Heart right ventricle (tissue), 16 donors: ENCODE measurements at regions of chr12 and their contacts with region 1.

Region 1: DNA sequence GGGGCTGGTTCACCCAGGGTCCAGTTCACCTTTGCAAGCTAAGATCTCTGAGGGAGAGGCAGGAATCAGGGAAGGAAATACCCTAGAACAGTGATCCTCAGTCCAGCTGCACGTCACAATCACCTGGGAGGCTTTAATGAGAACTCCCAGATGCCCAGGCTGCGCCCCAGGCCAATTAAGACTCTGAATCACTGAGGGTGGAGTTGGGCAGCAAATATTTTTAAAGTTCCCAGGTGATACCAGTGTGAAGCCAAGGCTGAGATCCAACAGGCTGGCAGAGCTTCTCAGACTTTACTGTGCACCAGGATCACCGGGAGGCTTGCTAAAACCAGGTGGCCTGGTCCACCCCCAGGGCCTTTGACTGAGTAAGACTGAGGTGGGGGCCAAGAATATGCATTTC is 23.8 kb downstream of the MYL2 start:
- DNase-seq: no peak
- ATAC-seq: no peak
- H3K4me3 ChIP-seq: no peak overlapping the region
- H3K27ac ChIP-seq: no peak overlapping the region
- H3K4me1 ChIP-seq: peaks cover 0 to 17% (median 5%) of the 10 kb centered on the region in 9 donors
- H3K27me3 ChIP-seq: peaks cover 0 to 7% (median 0%) of the 10 kb centered on the region in 7 donors
- CTCF ChIP-seq: no peak

Region 2: DNA sequence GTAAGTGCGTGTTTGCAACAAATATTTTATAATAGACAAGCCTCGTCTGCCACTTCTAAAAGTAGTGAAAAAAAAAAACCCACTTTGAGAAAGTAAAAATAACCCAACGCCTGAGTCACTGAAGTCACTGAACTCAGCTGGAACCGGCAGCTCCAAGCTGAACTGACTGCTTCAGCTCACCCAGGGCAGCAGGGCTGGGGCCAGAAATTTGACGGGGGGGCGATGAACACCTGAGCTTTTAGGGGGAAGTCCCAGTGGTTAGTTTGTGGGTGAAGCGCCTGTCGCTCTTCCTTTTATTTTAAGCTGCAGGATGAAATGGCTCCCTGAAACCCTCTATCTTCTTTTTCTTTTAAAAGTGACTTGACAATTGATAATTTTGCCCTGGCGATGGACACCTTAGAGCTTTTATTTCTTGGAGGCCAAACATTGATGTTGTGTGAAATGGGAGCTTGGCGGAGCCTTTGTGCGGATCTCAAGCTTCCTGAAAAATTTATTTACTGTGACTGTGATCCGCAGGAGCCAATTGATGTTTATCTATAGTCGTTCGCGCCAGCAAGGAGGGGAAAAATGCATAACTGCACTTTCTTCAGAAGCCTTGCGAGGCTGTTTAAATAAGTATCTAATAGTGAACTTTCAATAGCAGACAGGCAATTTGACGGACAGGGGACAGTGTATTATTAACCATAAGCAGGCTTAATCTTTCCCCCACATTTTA is 197.0 kb after region 1 on chr12:
- intact Hi-C with region 1: no loop called
- DNase-seq: no peak
- ATAC-seq: no peak
- H3K4me3 ChIP-seq: no peak overlapping the region
- H3K27ac ChIP-seq: no peak overlapping the region
- H3K4me1 ChIP-seq: no peaks in the 10 kb centered on the region
- H3K27me3 ChIP-seq: peaks cover 0 to 33% (median 10%) of the 10 kb centered on the region in 7 donors
- CTCF ChIP-seq: no peak

Region 3: GRCh38 chr12:111174251-111174960 is 277.8 kb after region 1 on chr12:
- intact Hi-C with region 1: no loop called
- DNase-seq: no peak
- ATAC-seq: peak in 2 of 8 donors; percentile 43
- H3K4me3 ChIP-seq: no peak overlapping the region
- H3K27ac ChIP-seq: no peak overlapping the region
- H3K4me1 ChIP-seq: peaks cover 0 to 33% (median 0%) of the 10 kb centered on the region in 9 donors
- H3K27me3 ChIP-seq: peaks cover 0 to 32% (median 6%) of the 10 kb centered on the region in 7 donors
- CTCF ChIP-seq: peak in 7 of 9 donors; percentile 14 to 43 (median 36)

Region 4: DNA sequence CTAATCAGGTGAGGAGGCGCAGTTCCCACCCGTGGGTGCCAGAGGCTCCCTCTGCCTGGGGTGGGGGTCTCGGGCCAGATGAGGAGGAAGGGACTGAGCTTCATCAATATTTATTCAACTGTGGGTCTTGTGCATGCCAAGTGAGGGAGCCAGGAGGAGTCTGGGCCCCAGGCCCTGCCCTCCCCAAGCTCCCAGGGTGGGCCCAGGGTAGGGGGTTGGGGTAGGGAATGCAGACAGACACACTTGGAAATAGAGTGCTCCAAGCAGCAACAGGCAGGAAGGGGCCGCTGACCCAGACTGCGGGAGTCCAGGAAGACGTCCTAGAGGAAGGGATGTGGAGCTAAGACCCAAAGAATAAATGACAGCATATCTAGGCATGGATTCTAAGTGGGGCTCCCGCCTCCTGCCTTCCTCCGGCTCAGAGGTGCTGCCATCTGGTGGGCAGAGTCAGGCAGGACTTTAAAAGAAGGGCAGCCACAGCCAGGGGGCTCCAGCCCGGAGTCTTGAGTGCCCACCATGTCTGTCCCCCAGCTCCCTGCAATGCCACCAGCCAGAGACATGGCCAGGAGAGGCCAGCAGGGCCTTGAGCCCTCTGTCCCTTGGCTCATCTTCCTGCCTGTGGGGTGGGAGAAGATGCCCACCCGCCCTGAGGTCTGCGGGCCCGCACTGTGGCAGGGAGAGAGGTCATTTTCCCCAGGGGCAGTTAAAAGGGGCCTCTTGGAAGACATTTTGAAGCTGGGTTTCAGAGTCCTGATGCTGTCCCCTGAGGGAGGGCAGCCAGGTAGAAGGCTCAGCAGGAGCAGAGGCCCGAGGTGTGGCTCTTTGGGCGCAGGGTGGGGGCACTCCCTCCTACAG is 402.2 kb after region 1 on chr12:
- intact Hi-C with region 1: loop called in 2 of 10 experiments (anchors 5 to 10 kb)
- DNase-seq: peak; percentile 23 to 35
- ATAC-seq: peak; percentile 45 to 84 (median 68)
- H3K4me3 ChIP-seq: no peak overlapping the region
- H3K27ac ChIP-seq: no peak overlapping the region
- H3K4me1 ChIP-seq: no peaks in the 10 kb centered on the region
- H3K27me3 ChIP-seq: peaks cover 0 to 5% (median 0%) of the 10 kb centered on the region in 7 donors
- CTCF ChIP-seq: peak; percentile 62 to 91 (median 80)

Region 5: DNA sequence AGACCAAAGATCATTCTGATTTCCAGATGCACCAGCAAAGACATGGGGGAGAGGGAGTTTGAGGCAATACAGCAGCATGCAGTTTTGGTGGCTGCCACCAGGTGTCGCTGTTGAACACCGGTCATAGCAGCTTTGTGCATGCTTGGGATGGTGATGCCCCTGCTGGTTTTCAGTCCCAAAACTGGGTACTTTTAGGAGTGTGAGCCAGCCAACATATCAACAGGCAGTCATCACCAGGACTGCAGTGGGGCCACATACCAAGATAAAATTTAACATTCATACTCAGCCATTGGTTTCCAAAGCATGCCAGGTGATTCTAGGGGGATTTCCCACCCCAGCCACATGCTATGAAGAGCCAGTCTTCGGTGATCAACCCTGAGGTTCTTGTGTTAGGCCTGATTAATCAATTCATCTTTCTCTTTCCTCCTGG is 408.1 kb after region 1 on chr12:
- intact Hi-C with region 1: loop called in 2 of 10 experiments (anchors 5 to 10 kb)
- DNase-seq: no peak
- ATAC-seq: no peak
- H3K4me3 ChIP-seq: no peak overlapping the region
- H3K27ac ChIP-seq: no peak overlapping the region
- H3K4me1 ChIP-seq: no peaks in the 10 kb centered on the region
- H3K27me3 ChIP-seq: no peaks in the 10 kb centered on the region
- CTCF ChIP-seq: peak in 8 of 9 donors; percentile 29 to 62 (median 47)

Region 6: GRCh38 chr12:111313833-111314259 is 417.3 kb after region 1 on chr12:
- intact Hi-C with region 1: loop called in 8 of 10 experiments (anchors 2 to 10 kb)
- DNase-seq: peak; percentile 65 to 73
- ATAC-seq: peak; percentile 61 to 79 (median 77)
- H3K4me3 ChIP-seq: peak overlapping the region in 1 of 10 donors; percentile 40
- H3K27ac ChIP-seq: peak overlapping the region in 1 of 10 donors; percentile 52
- H3K4me1 ChIP-seq: peaks cover 0 to 9% (median 0%) of the 10 kb centered on the region in 9 donors
- H3K27me3 ChIP-seq: peaks cover 0 to 14% (median 3%) of the 10 kb centered on the region in 7 donors
- CTCF ChIP-seq: peak; percentile 82 to 97 (median 92)